ENCODE measurements at regions of chr16 and their contacts with region 1.

Region 1: DNA sequence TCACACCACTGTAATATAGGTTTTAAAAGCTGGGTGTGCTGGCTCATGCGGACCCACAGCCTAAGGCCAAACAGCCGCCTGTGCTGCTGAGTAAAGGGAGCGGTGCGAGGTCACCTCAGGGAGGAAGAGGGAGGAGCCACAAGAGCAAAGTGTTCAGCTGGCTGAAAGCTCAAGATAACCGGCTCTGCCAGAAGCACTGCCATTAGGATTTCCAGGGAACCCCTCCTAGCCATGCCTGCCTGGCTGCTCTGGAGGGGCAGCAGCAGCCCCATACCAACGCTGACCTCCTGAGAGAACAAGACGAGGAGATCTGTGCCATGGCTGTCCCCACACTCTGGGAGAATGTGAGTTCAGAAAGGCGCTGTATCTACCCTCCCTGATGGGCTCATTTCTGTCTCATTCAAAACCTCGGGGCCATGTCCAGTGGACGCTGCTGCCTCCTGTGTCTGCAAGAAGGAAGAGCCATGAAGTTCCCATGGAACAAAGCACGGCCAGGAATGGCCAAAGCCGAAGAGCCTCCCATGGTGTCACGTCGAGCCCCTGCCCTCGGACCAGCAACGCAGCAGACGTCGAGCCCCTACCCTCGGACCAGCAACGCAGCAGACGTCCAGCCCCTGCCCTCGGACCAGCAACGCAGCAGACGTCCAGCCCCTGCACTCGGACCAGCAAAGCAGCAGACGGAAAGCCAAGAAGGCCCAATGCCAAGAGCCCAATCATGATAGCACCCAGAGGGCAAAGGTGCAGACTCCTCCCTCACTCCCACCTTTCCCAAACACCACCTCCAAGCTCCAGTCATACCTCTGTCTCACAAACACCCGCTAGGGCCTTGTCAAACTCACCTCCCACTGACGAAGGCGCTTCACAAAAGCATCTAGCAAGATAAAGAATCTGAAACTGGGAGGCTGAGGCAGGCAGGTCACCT is 107.0 kb downstream of the ANKRD11 start:
- DNase-seq: peak in 1 of 9 donors; percentile 18
- ATAC-seq: peak; percentile 60
- H3K4me3 ChIP-seq: no peak overlapping the region
- H3K4me3 Mint-ChIP-seq: peak overlapping the region; percentile 64 to 90 (median 75)
- H3K27ac ChIP-seq: peak overlapping the region; percentile 1
- H3K27ac Mint-ChIP-seq: peak overlapping the region; percentile 44 to 94 (median 83)
- H3K4me1 ChIP-seq: peaks cover 42 to 58% of the 10 kb centered on the region in 2 donors
- H3K4me1 Mint-ChIP-seq: peaks cover 68 to 98% (median 84%) of the 10 kb centered on the region in 7 donors
- H3K27me3 ChIP-seq: no peaks in the 10 kb centered on the region
- H3K27me3 Mint-ChIP-seq: no peaks in the 10 kb centered on the region

Region 2: DNA sequence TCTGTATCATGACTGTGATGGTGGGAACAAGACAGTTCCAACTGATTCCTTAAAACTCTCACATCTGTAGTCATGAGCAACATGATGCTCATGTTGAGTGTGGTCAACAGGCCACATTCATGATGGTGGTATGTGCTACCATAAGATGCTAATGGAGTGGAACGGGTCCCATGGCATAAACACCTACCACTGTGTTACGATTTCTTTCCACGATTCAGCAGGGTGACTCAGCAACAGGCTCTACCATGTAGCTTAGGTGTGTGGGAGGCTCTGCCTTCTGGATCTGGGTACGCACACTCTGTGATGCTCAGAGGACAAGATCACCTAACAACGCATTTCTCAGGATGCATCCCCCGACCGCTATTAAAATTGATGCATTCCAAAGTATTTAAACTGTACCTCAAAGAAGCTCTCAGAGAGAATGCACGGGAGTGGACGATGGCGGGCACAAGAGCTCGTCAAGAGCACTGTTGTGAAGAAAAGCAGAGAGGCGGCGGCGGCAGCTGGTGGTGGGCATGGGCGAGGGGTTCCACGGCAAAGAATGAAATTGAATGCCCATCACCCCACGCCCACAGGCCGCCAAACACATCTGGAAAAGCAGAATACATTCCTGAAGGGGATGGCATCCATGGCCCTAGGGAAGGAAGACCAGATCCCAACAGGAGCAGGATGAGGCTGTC is 32.5 kb before region 1 on chr16:
- CTCF ChIA-PET with region 1: no interaction called
- POLR2A ChIA-PET with region 1: no interaction called
- intact Hi-C with region 1: loop called in 1 of 2 experiments (anchors 5 kb)
- DNase-seq: peak in 1 of 9 donors; percentile 45
- ATAC-seq: no peak
- H3K4me3 ChIP-seq: no peak overlapping the region
- H3K4me3 Mint-ChIP-seq: peak overlapping the region in 7 of 10 donors; percentile 0 to 67 (median 31)
- H3K27ac ChIP-seq: no peak overlapping the region
- H3K27ac Mint-ChIP-seq: peak overlapping the region in 7 of 9 donors; percentile 3 to 80 (median 57)
- H3K4me1 ChIP-seq: peaks cover 34 to 72% of the 10 kb centered on the region in 2 donors
- H3K4me1 Mint-ChIP-seq: peaks cover 70 to 99% (median 90%) of the 10 kb centered on the region in 7 donors
- H3K27me3 ChIP-seq: no peaks in the 10 kb centered on the region
- H3K27me3 Mint-ChIP-seq: no peaks in the 10 kb centered on the region

Region 3: GRCh38 chr16:89363621-89364393 is 19.5 kb before region 1 on chr16:
- CTCF ChIA-PET with region 1: interaction called, 4 read pairs
- POLR2A ChIA-PET with region 1: interaction called, 8 read pairs
- intact Hi-C with region 1: loop called (anchors 2 kb)
- DNase-seq: peak in 2 of 9 donors; percentile 12 to 59
- ATAC-seq: no peak
- H3K4me3 ChIP-seq: no peak overlapping the region
- H3K4me3 Mint-ChIP-seq: peak overlapping the region; percentile 10 to 73 (median 62)
- H3K27ac ChIP-seq: peak overlapping the region; percentile 23
- H3K27ac Mint-ChIP-seq: peak overlapping the region; percentile 13 to 90 (median 77)
- H3K4me1 ChIP-seq: peaks cover 56 to 75% of the 10 kb centered on the region in 2 donors
- H3K4me1 Mint-ChIP-seq: peaks cover 65 to 99% (median 87%) of the 10 kb centered on the region in 7 donors
- H3K27me3 ChIP-seq: no peaks in the 10 kb centered on the region
- H3K27me3 Mint-ChIP-seq: no peaks in the 10 kb centered on the region